ENCODE measurements at regions of chr9 and their contacts with region 1.

Region 1: DNA sequence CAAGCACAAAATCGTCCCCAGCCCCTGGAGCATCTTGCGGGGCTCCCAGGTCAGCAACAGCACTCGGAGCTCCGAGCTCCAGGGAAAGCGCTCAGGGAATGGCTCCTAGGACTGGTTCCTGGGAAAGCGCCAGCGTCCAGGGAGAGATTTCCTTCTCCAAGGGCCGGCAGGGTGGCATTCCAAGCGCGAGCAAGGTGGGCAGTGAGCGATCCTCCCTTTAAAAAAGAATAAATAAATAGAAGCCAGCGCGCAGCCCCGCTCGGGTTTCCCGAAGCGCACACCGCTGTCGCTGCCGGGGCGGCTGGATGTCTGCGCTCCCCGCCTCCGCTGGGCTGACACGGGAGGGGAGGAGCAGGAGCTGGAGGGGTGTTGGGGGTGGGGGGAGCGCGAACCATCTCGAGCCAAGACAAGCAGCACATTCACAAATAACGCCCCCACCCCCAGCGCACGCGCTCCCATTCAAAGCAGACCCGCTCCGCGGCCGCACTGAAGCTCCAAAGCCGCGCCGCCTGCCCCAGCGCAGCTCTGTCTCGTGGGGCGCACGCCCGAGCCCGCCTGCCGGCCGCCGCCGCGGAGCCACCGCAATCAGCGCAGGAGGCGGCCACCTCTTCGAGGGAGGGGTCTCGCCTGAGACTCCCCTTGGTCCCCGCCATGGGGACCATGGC is 327.4 kb downstream of the SH3GL2 start:
- DNase-seq: no peak
- ATAC-seq: no peak
- H3K4me3 ChIP-seq: no peak overlapping the region
- H3K27ac ChIP-seq: no peak overlapping the region
- H3K4me1 ChIP-seq: no peaks in the 10 kb centered on the region
- H3K27me3 ChIP-seq: peaks cover 25% of the 10 kb centered on the region
- CTCF ChIP-seq: no peak
- POLR2A ChIP-seq: no peak
- RAD21 ChIP-seq: no peak

Region 2: GRCh38 chr9:17852108-17852507 is 54.2 kb before region 1 on chr9:
- CTCF ChIA-PET with region 1: no interaction called
- POLR2A ChIA-PET with region 1: no interaction called
- dilution Hi-C with region 1: no loop called
- in situ Hi-C with region 1: no loop called
- intact Hi-C with region 1: loop called (anchors 10 kb)
- DNase-seq: no peak
- ATAC-seq: no peak
- H3K4me3 ChIP-seq: no peak overlapping the region
- H3K27ac ChIP-seq: no peak overlapping the region
- H3K4me1 ChIP-seq: no peaks in the 10 kb centered on the region
- H3K27me3 ChIP-seq: no peaks in the 10 kb centered on the region; the same call in 1 of the 2 replicates
- CTCF ChIP-seq: no peak
- POLR2A ChIP-seq: no peak
- RAD21 ChIP-seq: no peak

Region 3: GRCh38 chr9:17970277-17970676 is 64.0 kb after region 1 on chr9:
- CTCF ChIA-PET with region 1: no interaction called
- POLR2A ChIA-PET with region 1: no interaction called
- dilution Hi-C with region 1: no loop called
- in situ Hi-C with region 1: no loop called
- intact Hi-C with region 1: loop called (anchors 10 kb)
- DNase-seq: no peak
- ATAC-seq: no peak
- H3K4me3 ChIP-seq: no peak overlapping the region
- H3K27ac ChIP-seq: no peak overlapping the region
- H3K4me1 ChIP-seq: no peaks in the 10 kb centered on the region
- H3K27me3 ChIP-seq: no peaks in the 10 kb centered on the region
- CTCF ChIP-seq: no peak
- POLR2A ChIP-seq: no peak
- RAD21 ChIP-seq: no peak